Cardiac septum (tissue), 1 donor: ENCODE measurements at regions of chr7 and their contacts with region 1.

Region 1: DNA sequence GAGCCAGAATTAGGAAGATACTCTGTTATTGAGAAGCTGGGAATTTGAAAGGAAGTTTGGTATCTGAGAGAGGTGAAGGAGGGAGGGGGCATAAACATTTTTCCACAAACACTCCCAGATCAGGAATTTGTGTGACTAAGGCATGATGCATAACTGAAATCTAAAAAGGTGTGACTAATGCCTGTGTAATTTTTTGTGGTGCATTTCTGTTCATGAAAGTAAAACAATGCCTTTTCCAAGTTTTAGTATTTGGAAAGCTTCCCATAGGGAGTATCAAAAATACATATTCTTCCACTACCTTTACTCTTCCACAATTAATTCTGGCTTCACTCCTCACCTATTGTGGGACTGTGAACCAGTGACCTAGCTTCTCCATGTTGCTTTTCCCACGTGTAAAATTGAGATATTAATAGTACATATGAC is 56.4 kb upstream of the CAV2 start:
- DNase-seq: no peak

Region 2: DNA sequence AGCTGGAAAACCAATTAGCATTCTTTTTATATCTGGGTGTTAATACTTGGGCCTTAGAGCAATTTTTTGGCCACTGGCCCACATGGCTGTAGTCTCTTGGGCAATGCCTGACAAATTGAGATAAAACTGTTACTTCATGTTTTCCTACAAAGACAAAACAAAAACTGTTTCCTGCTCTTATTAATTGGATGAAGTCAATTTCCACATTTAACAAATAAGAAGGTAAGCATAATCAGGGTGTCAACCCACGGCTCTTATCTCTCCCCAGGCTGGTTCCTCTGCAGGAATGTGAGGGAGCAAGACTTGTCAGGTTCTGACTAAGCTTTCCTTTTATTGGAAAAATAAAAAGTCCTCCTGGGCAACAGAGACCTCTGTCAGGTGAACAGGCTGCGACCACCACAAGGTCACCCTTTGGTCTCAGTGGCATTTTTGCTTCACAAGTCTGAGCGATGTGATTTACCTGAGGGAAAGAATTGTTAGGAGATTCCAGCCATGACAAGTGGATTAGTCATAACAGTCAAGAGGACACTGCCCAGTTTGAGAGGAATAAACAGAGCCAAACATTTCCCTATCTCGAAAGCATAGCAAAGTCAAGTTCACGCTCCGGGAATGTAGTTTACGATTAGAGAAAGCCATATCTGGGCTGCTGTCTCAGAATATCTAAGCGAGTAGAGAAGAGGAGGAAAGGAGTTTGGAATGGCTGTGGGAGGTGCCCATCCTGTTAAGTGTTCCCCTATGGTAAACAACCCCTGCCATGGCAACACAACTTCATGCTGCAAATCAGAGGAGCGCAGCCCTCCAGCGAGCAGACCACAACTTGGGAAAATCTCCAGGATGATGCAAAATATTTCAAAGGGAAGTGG is 88.3 kb before region 1 on chr7:
- intact Hi-C with region 1: loop called (anchors 1 kb)
- DNase-seq: peak; percentile 83

Region 3: DNA sequence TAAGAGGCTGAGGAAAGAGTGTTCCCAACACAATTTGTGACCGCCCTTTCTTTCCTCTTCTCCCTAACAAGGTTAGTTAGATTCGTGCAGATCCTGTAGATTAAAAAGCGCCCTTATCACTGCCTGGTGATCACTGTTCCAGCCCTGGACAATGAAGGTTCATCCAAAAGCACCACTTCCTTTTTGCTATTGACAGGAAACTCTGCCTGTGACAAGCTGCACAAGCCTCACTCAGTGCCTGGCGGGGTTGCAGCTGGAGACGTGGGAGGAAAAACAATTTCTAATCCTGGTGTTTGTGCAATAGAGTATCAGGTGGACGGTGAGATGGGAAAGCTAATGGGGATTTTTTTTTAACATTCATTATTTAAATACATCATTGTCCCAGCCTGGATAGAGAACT is 49.5 kb before region 1 on chr7:
- intact Hi-C with region 1: loop called (anchors 5 kb)
- DNase-seq: no peak

Region 4: DNA sequence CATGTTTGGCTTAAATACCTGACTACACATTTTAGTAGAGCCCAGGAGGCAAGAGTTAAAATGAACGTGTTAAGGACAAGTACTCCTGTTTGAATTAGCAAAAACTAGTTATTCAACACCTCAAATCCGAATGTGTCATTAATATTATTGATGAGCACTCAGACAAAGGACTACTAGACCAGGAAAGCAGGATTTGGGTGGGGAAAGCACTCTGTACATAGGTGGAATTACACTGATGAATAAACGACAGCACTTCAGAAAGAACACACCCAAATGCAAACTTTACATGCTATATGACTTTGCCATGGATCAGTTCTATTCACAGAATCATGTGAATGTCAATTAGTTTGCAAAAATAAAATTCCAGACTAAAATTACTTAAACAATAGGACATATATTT is 38.7 kb before region 1 on chr7:
- intact Hi-C with region 1: no loop called
- DNase-seq: no peak

Region 5: GRCh38 chr7:116499168-116500077 is 56.3 kb after region 1 on chr7 and contains the start of gene CAV2:
- intact Hi-C with region 1: loop called (anchors 2 kb)
- DNase-seq: peak; percentile 86
- total RNA-seq, gene CAV2: 311 TPM

Region 6: GRCh38 chr7:116576350-116577319 is 133.5 kb after region 1 on chr7:
- intact Hi-C with region 1: loop called (anchors 5 kb)
- DNase-seq: no peak

Region 7: DNA sequence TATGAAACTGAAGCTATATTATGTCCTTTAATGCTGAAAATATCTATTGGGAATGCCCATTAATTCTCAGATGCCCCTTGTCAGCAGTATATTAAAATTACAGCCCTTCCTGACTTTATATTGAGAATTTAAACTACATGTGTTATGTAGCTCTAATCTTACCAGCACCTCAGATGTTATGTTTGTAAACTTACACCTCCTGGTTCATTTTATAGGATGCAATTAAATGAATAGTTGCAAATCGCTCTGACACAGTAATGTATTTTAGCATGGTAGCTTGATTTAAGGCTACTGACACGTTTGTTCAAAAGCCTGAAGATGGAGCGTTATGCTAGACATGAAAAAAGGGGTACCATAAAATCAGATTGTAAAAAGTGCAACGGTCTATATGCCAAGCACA is 193.9 kb after region 1 on chr7:
- intact Hi-C with region 1: no loop called
- DNase-seq: no peak